HepG2 (cell line): ENCODE measurements at regions of chr11 and their contacts with region 1.

Region 1: GRCh38 chr11:74449369-74449931 is 17.9 kb downstream of the KCNE3 start:
- DNase-seq: peak; percentile 52
- ATAC-seq: peak; percentile 85
- H3K4me3 ChIP-seq: no peak overlapping the region
- H3K27ac ChIP-seq: no peak overlapping the region
- H3K4me1 ChIP-seq: peaks cover 4% of the 10 kb centered on the region; the same call in 1 of the 2 replicates
- H3K27me3 ChIP-seq: peaks cover 0 to 4% of the 10 kb centered on the region in 2 experiments; a peak in 1 of 5 replicates
- CTCF ChIP-seq: peak; percentile 83
- EP300 ChIP-seq: no peak
- POLR2A ChIP-seq: no peak
- RAD21 ChIP-seq: peak; percentile 60; the same call in 1 of the 2 replicates

Region 2: GRCh38 chr11:74255741-74256369 is 193.6 kb before region 1 on chr11:
- CTCF ChIA-PET with region 1: interaction called, 21 read pairs
- POLR2A ChIA-PET with region 1: interaction called, 4 read pairs
- in situ Hi-C with region 1: loop called (anchors 10 kb)
- intact Hi-C with region 1: loop called (anchors 1 kb)
- DNase-seq: peak; percentile 42
- ATAC-seq: peak; percentile 61
- H3K4me3 ChIP-seq: no peak overlapping the region
- H3K27ac ChIP-seq: no peak overlapping the region
- H3K4me1 ChIP-seq: peaks cover 8% of the 10 kb centered on the region; the same call in 1 of the 2 replicates
- H3K27me3 ChIP-seq: no peaks in the 10 kb centered on the region
- CTCF ChIP-seq: peak; percentile 87
- EP300 ChIP-seq: no peak
- POLR2A ChIP-seq: no peak
- RAD21 ChIP-seq: 0 out of 2 replicates have a peak, but pooled peaks have one; percentile 21

Region 3: GRCh38 chr11:74388678-74389327 is 60.6 kb before region 1 on chr11:
- CTCF ChIA-PET with region 1: interaction called, 43 read pairs
- POLR2A ChIA-PET with region 1: no interaction called
- in situ Hi-C with region 1: loop called (anchors 10 kb)
- intact Hi-C with region 1: loop called (anchors 1 kb)
- DNase-seq: peak; percentile 42
- ATAC-seq: peak; percentile 68
- H3K4me3 ChIP-seq: no peak overlapping the region
- H3K27ac ChIP-seq: no peak overlapping the region
- H3K4me1 ChIP-seq: peaks cover 9% of the 10 kb centered on the region
- H3K27me3 ChIP-seq: no peaks in the 10 kb centered on the region; a peak in 1 of 5 replicates
- CTCF ChIP-seq: peak; percentile 76
- EP300 ChIP-seq: no peak
- POLR2A ChIP-seq: no peak
- RAD21 ChIP-seq: no peak

Region 4: GRCh38 chr11:74398244-74399159 is 50.9 kb before region 1 on chr11 and contains the start of gene PGM2L1:
- CTCF ChIA-PET with region 1: no interaction called
- POLR2A ChIA-PET with region 1: no interaction called
- in situ Hi-C with region 1: loop called (anchors 10 kb)
- intact Hi-C with region 1: no loop called
- DNase-seq: peak; percentile 86
- ATAC-seq: peak; percentile 93
- H3K4me3 ChIP-seq: peak within 1 kb of the TSS; percentile 69 to 84 (median 71)
- H3K27ac ChIP-seq: peak within 1 kb of the TSS; percentile 69
- H3K4me1 ChIP-seq: peaks cover 12% of the 10 kb centered on the region; the same call in 1 of the 2 replicates
- H3K27me3 ChIP-seq: no peaks in the 10 kb centered on the region; a peak in 1 of 5 replicates
- CTCF ChIP-seq: no peak; the same call in 1 of the 2 replicates
- EP300 ChIP-seq: no peak
- POLR2A ChIP-seq: peak in 1 of 2 experiments; percentile 51; a peak in 2 of 4 replicates
- RAD21 ChIP-seq: no peak
- total RNA-seq, gene PGM2L1: 1.2 and 2.1 TPM in 2 replicates

Region 5: GRCh38 chr11:74570266-74571061 is 121.0 kb after region 1 on chr11:
- CTCF ChIA-PET with region 1: interaction called, 36 read pairs
- POLR2A ChIA-PET with region 1: no interaction called
- in situ Hi-C with region 1: no loop called
- intact Hi-C with region 1: no loop called
- DNase-seq: peak; percentile 57
- ATAC-seq: peak; percentile 92
- H3K4me3 ChIP-seq: no peak overlapping the region
- H3K27ac ChIP-seq: no peak overlapping the region
- H3K4me1 ChIP-seq: peaks cover 25% of the 10 kb centered on the region
- H3K27me3 ChIP-seq: peaks cover 0 to 2% of the 10 kb centered on the region in 2 experiments; a peak in 2 of 5 replicates
- CTCF ChIP-seq: peak; percentile 84
- EP300 ChIP-seq: no peak
- POLR2A ChIP-seq: no peak
- RAD21 ChIP-seq: peak; percentile 73